Common myeloid progenitor, CD34-positive (primary cell): ENCODE measurements at regions of chr2 and their contacts with region 1.

Region 1: DNA sequence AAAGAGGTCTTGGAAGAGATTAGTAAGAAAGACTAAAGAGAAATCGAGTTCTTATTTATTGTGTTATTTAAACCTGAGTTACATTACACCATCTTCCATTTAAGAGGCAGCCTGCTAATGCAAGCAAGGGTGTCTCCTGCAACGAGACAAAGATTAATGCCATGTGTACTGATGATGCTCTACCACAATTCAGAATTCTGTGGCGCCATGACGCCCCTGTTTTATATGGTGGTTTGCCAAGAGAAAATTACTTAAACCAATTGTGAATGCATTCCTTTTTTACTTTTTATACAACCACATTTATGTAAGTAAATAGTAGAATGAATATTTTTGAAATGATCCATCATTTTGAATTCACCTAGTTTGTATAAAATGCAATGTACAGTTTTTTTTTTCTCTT is 356.1 kb upstream of the ZEB2 start:
- DNase-seq: no peak
- H3K4me3 ChIP-seq: no peak overlapping the region
- H3K27ac ChIP-seq: no peak overlapping the region
- H3K4me1 ChIP-seq: no peaks in the 10 kb centered on the region
- H3K27me3 ChIP-seq: no peaks in the 10 kb centered on the region

Region 2: DNA sequence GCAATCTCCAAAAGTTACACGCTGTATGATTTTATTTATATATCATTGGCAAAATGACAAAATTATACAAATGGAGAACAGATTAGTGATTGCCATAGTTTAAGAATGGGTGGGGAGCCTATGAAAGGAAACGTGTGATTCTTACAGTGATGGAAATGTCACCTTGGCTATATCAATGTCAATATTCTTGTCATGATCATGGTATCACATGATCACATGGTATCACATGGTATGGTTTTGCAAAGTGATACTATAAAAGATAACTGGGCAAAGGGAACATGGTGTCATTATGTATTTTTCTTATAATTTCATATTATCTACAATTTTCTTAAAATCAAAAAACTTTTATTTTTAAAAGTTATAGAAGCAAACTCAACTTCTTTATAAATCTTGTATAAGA is 250.1 kb after region 1 on chr2:
- CTCF ChIA-PET with region 1: no interaction called
- POLR2A ChIA-PET with region 1: interaction called, 10 read pairs
- DNase-seq: no peak
- H3K4me3 ChIP-seq: no peak overlapping the region
- H3K27ac ChIP-seq: no peak overlapping the region
- H3K4me1 ChIP-seq: no peaks in the 10 kb centered on the region
- H3K27me3 ChIP-seq: no peaks in the 10 kb centered on the region